CD8-positive, alpha-beta T cell (primary cell): ENCODE measurements at regions of chr1 and their contacts with region 1.

Region 1: GRCh38 chr1:1115786-1116700 is at the start of gene C1orf159:
- DNase-seq: peak; percentile 98 to 100 (median 98)
- ATAC-seq: peak; percentile 94
- H3K4me3 ChIP-seq: peak within 1 kb of the TSS; percentile 51 to 66
- H3K4me3 Mint-ChIP-seq: peak within 1 kb of the TSS; percentile 90
- H3K27ac ChIP-seq: peak within 1 kb of the TSS; percentile 47 to 64
- H3K27ac Mint-ChIP-seq: peak within 1 kb of the TSS; percentile 82
- H3K4me1 ChIP-seq: peaks cover 11% of the 10 kb centered on the region
- H3K4me1 Mint-ChIP-seq: peaks cover 13% of the 10 kb centered on the region
- H3K27me3 ChIP-seq: peaks cover 0 to 3% of the 10 kb centered on the region in 2 experiments
- H3K27me3 Mint-ChIP-seq: peaks cover 4% of the 10 kb centered on the region
- CTCF ChIP-seq: no peak
- total RNA-seq, gene C1orf159: 14.3 to 17.6 TPM

Region 2: GRCh38 chr1:1019122-1019999 is 96.7 kb before region 1 on chr1:
- CTCF ChIA-PET with region 1: no interaction called
- POLR2A ChIA-PET with region 1: no interaction called
- intact Hi-C with region 1: loop called in 1 of 2 experiments (anchors 1 kb)
- DNase-seq: peak; percentile 62 to 89 (median 81)
- ATAC-seq: peak; percentile 85
- H3K4me3 ChIP-seq: peak overlapping the region; percentile 35 to 39
- H3K4me3 Mint-ChIP-seq: peak overlapping the region; percentile 77
- H3K27ac ChIP-seq: peak overlapping the region in 1 of 2 experiments; percentile 14
- H3K27ac Mint-ChIP-seq: peak overlapping the region; percentile 32
- H3K4me1 ChIP-seq: peaks cover 13% of the 10 kb centered on the region
- H3K4me1 Mint-ChIP-seq: peaks cover 21% of the 10 kb centered on the region
- H3K27me3 ChIP-seq: peaks cover 0 to 6% of the 10 kb centered on the region in 2 experiments
- H3K27me3 Mint-ChIP-seq: no peaks in the 10 kb centered on the region
- CTCF ChIP-seq: no peak

Region 3: DNA sequence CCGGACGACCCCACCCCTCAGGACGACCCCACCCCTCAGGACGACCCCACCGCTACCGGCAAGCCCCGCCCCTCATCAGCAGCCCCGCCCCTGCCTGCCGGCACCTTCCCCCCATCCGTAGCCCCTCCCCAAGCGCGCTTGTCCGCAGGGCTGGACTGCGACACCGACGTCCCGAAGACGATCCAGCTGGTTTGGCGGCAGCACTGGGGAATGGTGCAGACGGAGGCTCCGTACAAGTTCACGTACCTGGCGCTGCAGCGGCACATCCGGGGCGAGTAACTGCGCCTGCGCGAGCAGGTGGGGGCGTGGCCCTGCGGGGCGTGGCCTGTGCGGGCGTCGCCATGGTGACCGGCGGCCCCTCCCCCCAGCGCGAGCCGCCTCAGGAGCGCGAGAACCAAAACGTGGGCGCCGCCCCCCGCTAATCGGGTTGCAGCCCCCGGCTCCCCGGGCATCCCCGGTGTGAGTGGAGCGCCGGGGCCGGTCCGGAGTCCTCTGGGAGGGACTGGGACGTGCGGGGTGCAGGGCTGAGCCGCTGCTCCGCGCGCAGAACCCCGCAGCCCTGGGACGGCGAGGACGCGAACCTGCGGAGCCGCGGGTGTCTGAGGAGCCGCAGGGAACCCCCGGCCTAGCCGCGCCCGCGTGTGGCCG is 46.9 kb before region 1 on chr1:
- CTCF ChIA-PET with region 1: interaction called, 3 read pairs
- POLR2A ChIA-PET with region 1: no interaction called
- intact Hi-C with region 1: loop called (anchors 1 to 2 kb)
- DNase-seq: peak; percentile 86 to 97 (median 89)
- ATAC-seq: peak; percentile 58
- H3K4me3 ChIP-seq: peak overlapping the region; percentile 65 to 88
- H3K4me3 Mint-ChIP-seq: peak overlapping the region; percentile 81
- H3K27ac ChIP-seq: peak overlapping the region; percentile 53 to 55
- H3K27ac Mint-ChIP-seq: peak overlapping the region; percentile 80
- H3K4me1 ChIP-seq: peaks cover 20% of the 10 kb centered on the region
- H3K4me1 Mint-ChIP-seq: peaks cover 7% of the 10 kb centered on the region
- H3K27me3 ChIP-seq: peaks cover 0 to 8% of the 10 kb centered on the region in 2 experiments
- H3K27me3 Mint-ChIP-seq: no peaks in the 10 kb centered on the region
- CTCF ChIP-seq: no peak

Region 4: DNA sequence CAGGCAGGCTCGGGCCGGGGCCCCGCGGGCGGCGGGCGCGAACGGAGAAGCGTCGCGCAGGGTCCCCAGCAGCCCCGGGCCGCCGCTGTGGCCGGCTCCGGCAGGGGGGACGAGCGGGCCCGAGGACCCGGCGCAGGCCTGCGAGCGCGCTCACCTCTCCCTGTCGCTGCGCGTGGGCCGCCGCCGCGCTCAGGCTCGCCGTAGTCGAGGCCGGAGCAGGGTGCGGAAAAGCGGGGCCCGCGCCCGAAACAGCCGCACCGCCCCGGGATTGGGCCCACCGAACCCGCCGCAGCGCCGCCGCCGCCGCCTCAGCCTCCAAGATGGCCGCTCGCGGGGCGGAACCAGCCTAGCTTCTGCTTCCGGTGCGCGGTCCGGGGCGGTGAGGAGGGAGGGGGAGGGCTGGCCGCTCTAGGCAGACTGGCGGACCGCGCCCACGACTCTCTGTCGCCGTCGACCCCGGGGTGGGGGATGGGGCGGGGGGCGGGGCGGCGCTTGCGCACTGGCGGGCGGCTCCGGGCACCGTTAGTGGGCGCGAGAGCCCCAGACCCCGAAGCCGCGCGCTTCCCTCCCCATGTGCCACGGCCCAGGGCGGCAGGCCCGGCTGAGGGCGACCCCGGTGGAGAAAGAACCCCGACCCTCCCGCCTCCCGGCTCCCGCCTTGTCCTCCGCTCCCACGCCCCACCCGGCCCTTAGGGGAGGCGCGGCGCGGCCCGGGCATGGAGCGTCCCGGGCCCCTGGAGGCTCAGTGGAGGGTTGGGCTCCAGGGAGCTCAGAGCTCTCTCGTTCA is 157.7 kb after region 1 on chr1 and contains the start of gene UBE2J2:
- CTCF ChIA-PET with region 1: no interaction called
- POLR2A ChIA-PET with region 1: interaction called, 3 read pairs
- intact Hi-C with region 1: loop called (anchors 1 kb)
- DNase-seq: peak; percentile 86 to 96 (median 93)
- ATAC-seq: peak; percentile 95
- H3K4me3 ChIP-seq: peak within 1 kb of the TSS; percentile 69 to 91
- H3K4me3 Mint-ChIP-seq: peak within 1 kb of the TSS; percentile 88
- H3K27ac ChIP-seq: peak within 1 kb of the TSS; percentile 53 to 63
- H3K27ac Mint-ChIP-seq: peak within 1 kb of the TSS; percentile 89
- H3K4me1 ChIP-seq: peaks cover 39% of the 10 kb centered on the region
- H3K4me1 Mint-ChIP-seq: peaks cover 40% of the 10 kb centered on the region
- H3K27me3 ChIP-seq: no peaks in the 10 kb centered on the region
- H3K27me3 Mint-ChIP-seq: no peaks in the 10 kb centered on the region
- CTCF ChIP-seq: no peak
- total RNA-seq, gene UBE2J2: 46.4 to 50.7 TPM

Region 5: DNA sequence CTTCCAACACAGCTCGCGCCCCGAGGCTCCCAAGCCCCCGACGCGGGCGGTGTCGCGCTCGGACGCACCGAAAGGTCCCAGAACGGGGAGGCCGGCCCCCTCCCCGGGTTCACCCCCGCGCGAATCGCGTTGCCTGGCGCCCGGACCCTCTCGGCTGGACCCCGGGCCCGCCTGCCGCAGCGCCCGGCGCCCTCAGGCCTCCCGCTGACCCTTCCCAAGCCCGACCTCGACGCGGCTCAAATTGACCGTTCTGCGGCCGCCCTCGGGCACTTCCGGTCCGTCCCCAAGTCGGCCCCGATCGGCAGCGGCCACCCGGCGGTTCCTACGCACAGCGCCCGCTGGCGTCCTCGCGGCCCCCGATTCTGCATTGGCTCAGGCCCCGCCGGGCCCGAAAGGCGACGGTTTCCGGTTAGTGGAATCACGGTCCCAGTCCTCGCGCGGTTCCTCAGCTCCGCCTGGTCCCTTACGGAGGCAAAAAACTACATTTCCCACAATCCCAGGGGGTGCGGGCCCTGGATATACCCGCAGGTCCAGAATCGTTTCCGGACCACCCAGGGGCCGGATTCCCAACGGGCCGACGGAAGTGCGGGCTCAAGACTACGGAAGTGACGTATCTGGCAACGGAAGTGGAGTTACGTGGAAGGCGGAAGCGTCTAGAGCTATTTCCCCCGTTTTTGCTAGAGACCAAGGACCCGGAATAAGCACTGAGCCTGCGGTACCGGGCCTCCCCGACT is 259.1 kb after region 1 on chr1 and contains the start of gene AURKAIP1:
- CTCF ChIA-PET with region 1: interaction called, 30 read pairs
- POLR2A ChIA-PET with region 1: interaction called, 6 read pairs
- intact Hi-C with region 1: loop called (anchors 1 kb)
- DNase-seq: peak; percentile 89 to 100 (median 95)
- ATAC-seq: peak; percentile 58
- H3K4me3 ChIP-seq: peak within 1 kb of the TSS; percentile 79 to 91
- H3K4me3 Mint-ChIP-seq: peak within 1 kb of the TSS; percentile 86
- H3K27ac ChIP-seq: peak within 1 kb of the TSS; percentile 83 to 94
- H3K27ac Mint-ChIP-seq: peak within 1 kb of the TSS; percentile 94
- H3K4me1 ChIP-seq: peaks cover 33% of the 10 kb centered on the region
- H3K4me1 Mint-ChIP-seq: peaks cover 33% of the 10 kb centered on the region
- H3K27me3 ChIP-seq: no peaks in the 10 kb centered on the region
- H3K27me3 Mint-ChIP-seq: no peaks in the 10 kb centered on the region
- CTCF ChIP-seq: no peak
- total RNA-seq, gene AURKAIP1: 58.4 to 62.6 TPM